Sigmoid colon (tissue), 7 donors: ENCODE measurements at regions of chr1 and their contacts with region 1.

Region 1: DNA sequence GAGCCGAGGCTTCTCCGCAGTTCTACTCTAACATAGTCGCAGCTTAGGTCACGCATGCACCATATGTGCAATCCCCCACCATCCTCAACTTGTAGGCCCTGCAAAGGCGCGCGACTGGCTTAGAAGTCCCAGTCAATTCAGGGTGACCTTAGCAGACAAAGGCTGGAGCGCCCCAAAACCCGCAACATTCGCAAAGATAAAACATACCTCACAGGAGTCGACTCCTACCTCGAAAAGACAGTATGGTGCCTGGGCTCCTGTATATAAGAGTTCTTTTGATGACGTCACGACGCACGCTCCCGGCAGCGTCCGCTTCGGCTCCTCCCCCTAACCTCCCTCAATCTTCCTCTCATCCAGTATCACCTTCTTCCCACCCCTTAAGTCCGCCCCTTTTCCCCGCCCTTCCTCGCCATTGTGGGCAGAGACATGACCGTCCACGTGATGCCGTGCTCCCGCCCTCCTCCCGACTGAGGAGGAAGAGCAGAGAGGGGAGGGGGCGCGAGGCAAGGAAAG is at the start of gene GAS5:
- DNase-seq: peak; percentile 100
- H3K4me3 ChIP-seq: peak within 1 kb of the TSS; percentile 78 to 100 (median 94)
- H3K27ac ChIP-seq: peak within 1 kb of the TSS; percentile 95 to 99 (median 98)
- H3K4me1 ChIP-seq: peaks cover 0 to 39% (median 24%) of the 10 kb centered on the region in 4 donors
- H3K27me3 ChIP-seq: no peaks in the 10 kb centered on the region
- CTCF ChIP-seq: no peak
- EP300 ChIP-seq: no peak
- POLR2A ChIP-seq: peak; percentile 91 to 97
- total RNA-seq, gene GAS5: 443 to 618 (median 542) TPM

Region 2: GRCh38 chr1:173420330-173420806 is 447.4 kb before region 1 on chr1:
- intact Hi-C with region 1: loop called (anchors 5 kb)
- DNase-seq: no peak
- H3K4me3 ChIP-seq: peak overlapping the region in 1 of 4 donors; percentile 4
- H3K27ac ChIP-seq: peak overlapping the region in 1 of 4 donors; percentile 22
- H3K4me1 ChIP-seq: peaks cover 0 to 4% (median 0%) of the 10 kb centered on the region in 4 donors
- H3K27me3 ChIP-seq: no peaks in the 10 kb centered on the region
- CTCF ChIP-seq: peak; percentile 68 to 87 (median 78)
- EP300 ChIP-seq: no peak
- POLR2A ChIP-seq: no peak

Region 3: GRCh38 chr1:173476664-173477285 is 391.0 kb before region 1 on chr1:
- intact Hi-C with region 1: loop called (anchors 10 kb)
- DNase-seq: peak; percentile 97
- H3K4me3 ChIP-seq: peak overlapping the region; percentile 75 to 92 (median 85)
- H3K27ac ChIP-seq: peak overlapping the region; percentile 98 to 99 (median 99)
- H3K4me1 ChIP-seq: peaks cover 0 to 52% (median 46%) of the 10 kb centered on the region in 4 donors
- H3K27me3 ChIP-seq: no peaks in the 10 kb centered on the region
- CTCF ChIP-seq: no peak
- EP300 ChIP-seq: no peak
- POLR2A ChIP-seq: peak; percentile 18 to 27

Region 4: GRCh38 chr1:173824331-173825081 is 43.3 kb before region 1 on chr1 and contains the starts of genes CENPL and DARS2:
- intact Hi-C with region 1: loop called (anchors 2 kb)
- DNase-seq: peak; percentile 99
- H3K4me3 ChIP-seq: peak within 1 kb of the TSS; percentile 55 to 78 (median 69)
- H3K27ac ChIP-seq: peak within 1 kb of the TSS; percentile 87 to 92 (median 91)
- H3K4me1 ChIP-seq: peaks cover 0 to 25% (median 19%) of the 10 kb centered on the region in 4 donors
- H3K27me3 ChIP-seq: no peaks in the 10 kb centered on the region
- CTCF ChIP-seq: no peak
- EP300 ChIP-seq: peak in 1 of 4 donors; percentile 2
- POLR2A ChIP-seq: no peak
- total RNA-seq, gene CENPL: 3.8 to 7.8 (median 5.4) TPM
- total RNA-seq, gene DARS2: 5.2 to 10.0 (median 7.3) TPM

Region 5: DNA sequence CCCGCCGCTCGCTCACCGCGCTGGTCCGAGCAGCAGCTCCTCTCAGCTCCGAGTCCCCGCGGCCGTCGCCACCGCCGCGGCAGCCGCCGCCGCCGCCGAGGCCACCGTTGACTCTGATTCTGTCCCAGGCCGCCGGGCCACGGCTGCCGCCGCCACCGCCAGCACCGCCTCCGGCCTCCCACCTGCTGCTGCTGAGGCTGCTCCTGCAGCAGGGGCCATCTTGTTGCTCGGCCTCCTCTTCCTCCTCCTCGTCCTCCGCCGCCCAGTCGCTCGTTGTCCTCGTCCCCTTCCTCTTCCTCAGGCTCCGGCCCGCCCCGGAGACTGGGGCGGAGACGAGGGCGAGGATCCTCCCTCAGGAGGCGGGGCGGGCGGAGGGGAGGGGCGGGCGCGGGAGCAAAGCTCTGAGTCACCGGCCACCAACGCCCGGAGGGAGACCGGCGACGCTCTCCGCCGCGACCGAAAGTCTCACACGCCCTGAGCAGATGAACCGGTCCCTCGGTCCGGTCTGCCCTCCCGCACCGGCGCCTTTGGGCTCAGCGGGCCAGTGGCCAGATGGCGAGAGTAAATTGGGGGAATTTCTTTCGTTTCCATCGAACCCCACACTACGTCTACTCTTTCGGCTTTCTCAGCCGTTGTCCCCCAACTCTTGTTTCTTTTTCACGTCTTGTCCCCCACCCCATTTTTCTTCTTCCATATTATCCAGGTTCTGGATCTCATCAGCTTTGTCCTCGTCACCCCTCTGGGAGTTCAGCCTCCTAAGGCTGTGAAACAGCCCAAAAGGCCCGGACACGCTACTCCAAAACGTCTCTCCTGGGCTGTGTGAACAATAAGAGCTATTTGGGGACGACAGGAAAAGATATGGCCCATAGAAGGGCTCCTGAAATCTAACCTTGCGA is 154.5 kb after region 1 on chr1 and contains the start of gene RC3H1:
- intact Hi-C with region 1: loop called (anchors 2 kb)
- DNase-seq: peak; percentile 94
- H3K4me3 ChIP-seq: peak within 1 kb of the TSS; percentile 64 to 93 (median 79)
- H3K27ac ChIP-seq: peak within 1 kb of the TSS; percentile 90 to 97 (median 95)
- H3K4me1 ChIP-seq: peaks cover 0 to 51% (median 50%) of the 10 kb centered on the region in 4 donors
- H3K27me3 ChIP-seq: no peaks in the 10 kb centered on the region
- CTCF ChIP-seq: no peak
- EP300 ChIP-seq: no peak
- POLR2A ChIP-seq: peak; percentile 90 to 96
- total RNA-seq, gene RC3H1: 22.5 to 55.9 (median 34.8) TPM

Region 6: GRCh38 chr1:174159252-174160108 is 291.7 kb after region 1 on chr1 and contains the start of gene RABGAP1L:
- intact Hi-C with region 1: loop called (anchors 5 kb)
- DNase-seq: peak; percentile 96
- H3K4me3 ChIP-seq: peak within 1 kb of the TSS; percentile 80 to 90 (median 84)
- H3K27ac ChIP-seq: peak within 1 kb of the TSS; percentile 86 to 94 (median 90)
- H3K4me1 ChIP-seq: peaks cover 0 to 15% (median 10%) of the 10 kb centered on the region in 4 donors
- H3K27me3 ChIP-seq: no peaks in the 10 kb centered on the region
- CTCF ChIP-seq: no peak
- EP300 ChIP-seq: no peak
- POLR2A ChIP-seq: peak; percentile 74 to 77
- total RNA-seq, gene RABGAP1L: 30.4 to 42.9 (median 36.4) TPM

Region 7: DNA sequence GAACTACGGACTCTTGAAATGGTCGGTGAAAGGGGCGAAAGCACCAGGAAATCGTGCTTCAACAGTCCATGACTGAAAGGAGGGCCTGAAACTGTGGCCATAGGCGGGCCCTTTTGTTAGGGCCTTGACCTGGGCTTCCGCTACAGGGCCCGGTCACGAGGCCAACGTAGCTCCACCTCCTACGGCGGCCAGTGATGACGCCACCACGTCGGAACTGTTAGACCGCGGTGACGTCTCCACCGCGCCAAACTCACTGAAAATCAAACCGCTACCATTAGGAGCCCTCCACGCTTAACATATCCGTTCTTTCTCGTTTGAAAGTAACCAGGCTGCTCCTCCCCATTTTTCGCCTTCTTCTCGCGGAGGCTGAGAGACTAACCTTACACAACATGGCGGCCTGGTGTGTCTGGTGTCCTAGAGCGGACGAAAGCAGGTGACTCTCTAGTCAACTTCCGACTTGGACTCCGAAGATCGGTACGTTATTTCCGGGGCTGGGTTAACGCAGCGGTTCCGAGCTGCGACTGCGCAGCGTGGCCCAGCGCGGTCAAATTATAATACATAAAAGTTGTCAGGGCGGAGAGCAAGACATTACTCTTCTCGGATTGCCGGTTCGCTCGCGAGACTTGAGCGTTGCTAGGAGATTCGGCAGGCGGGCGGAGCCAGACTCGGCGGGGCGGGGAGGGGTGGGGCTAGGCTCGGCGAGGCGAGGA is 1131.6 kb after region 1 on chr1:
- intact Hi-C with region 1: loop called (anchors 5 kb)
- DNase-seq: peak; percentile 99
- H3K4me3 ChIP-seq: peak overlapping the region; percentile 72 to 96 (median 90)
- H3K27ac ChIP-seq: peak overlapping the region; percentile 93 to 99 (median 94)
- H3K4me1 ChIP-seq: peaks cover 0 to 44% (median 26%) of the 10 kb centered on the region in 4 donors
- H3K27me3 ChIP-seq: no peaks in the 10 kb centered on the region
- CTCF ChIP-seq: no peak
- EP300 ChIP-seq: peak in 3 of 4 donors; percentile 23 to 54 (median 51)
- POLR2A ChIP-seq: peak; percentile 95